ENCODE measurements at regions of chr2 and their contacts with region 1.

Region 1: GRCh38 chr2:216404010-216404618 is 8.2 kb upstream of the SMARCAL1 start:
- DNase-seq: peak; percentile 40
- CTCF ChIP-seq: peak; percentile 81

Region 2: GRCh38 chr2:216108967-216109921 is 294.9 kb before region 1 on chr2 and contains the start of gene XRCC5:
- CTCF ChIA-PET with region 1: interaction called, 16 read pairs
- POLR2A ChIA-PET with region 1: no interaction called
- DNase-seq: peak; percentile 93
- CTCF ChIP-seq: no peak

Region 3: DNA sequence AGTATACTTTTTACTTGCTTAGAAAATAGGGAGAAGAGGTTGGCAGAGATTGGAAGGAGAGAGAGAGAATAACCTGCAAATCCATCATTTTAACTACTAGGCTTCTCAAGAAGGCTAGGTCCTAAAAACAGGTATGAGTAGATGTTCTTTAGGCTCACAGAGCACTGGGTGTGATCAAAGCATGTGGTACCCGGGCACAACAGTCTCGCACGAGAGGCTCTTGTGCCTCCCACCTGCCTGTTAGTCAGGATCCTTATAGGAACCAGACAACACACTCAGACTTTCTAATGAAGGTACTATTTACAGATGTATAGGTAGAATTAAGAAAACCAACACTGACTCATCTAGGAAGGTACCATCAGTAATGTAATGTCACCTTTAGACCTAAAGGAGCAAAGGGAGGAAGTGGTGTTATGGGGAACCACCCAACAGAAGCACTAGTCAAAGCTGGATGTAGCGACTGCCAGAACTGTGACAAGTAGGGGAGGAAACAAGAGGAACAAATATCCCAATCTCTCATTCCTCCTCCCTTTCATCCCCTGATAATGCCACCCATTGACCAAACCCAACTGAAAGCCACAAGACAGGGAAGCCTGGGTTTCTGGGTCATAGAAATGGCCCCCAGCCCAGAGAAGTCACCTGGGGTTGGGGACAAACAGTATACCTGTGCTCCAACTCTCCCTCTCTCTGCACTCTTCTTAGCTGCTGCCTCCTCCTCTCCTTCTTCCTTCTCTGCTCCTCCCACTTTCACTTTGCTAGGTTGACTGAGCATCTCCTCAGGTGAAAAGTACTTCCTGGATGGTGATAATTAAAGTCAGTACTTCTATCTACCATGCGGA is 15.8 kb before region 1 on chr2:
- CTCF ChIA-PET with region 1: interaction called, 10 read pairs
- POLR2A ChIA-PET with region 1: no interaction called
- DNase-seq: peak; percentile 37
- CTCF ChIP-seq: no peak

Region 4: GRCh38 chr2:216498418-216499413 is 94.6 kb after region 1 on chr2 and contains the start of gene RPL37A:
- CTCF ChIA-PET with region 1: interaction called, 11 read pairs
- POLR2A ChIA-PET with region 1: no interaction called
- DNase-seq: peak; percentile 93
- CTCF ChIP-seq: no peak

Measured in GM10248 (cell line).